Prostate gland (tissue), 2 donors: ENCODE measurements at regions of chr18 and their contacts with region 1.

Region 1: DNA sequence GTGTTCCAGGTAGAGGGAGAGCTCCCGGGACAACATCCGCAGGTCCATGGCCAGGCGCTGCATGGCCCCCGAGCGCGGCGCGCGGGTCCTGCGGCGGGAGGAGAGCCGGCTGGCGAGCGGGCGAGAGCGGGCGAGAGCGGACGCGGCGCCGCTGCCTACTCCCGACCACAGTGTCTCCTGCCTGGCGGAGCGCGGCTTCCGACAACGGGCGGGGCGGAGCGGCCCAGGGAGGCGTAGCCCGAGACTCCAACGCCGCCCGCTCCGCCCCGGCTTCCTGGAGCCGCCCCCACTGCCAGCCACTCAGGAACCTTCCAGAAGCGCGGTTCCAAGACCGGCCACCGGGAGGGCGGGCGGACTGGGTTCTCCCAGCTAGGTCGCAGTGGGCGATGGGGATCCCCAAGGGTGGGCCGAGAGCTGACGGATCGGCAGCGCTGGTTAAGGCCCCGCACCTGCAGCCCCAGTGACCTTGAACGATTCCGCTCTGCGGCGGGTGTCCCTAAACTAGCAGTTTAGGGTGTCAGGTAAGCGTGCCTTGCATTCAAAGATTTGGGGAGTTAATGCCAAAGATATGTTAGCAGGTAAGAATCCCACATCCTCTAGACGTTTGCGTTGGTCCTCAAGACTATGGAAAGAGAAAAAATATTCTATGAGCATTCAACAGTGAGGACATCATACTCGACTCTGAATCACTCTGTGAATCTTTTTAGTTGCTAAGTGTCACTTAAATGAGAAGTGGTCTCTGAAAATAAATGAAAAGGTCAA is at the start of gene ABHD3:
- DNase-seq: peak; percentile 94
- H3K4me3 ChIP-seq: peak within 1 kb of the TSS; percentile 79 to 81
- H3K27ac ChIP-seq: peak within 1 kb of the TSS; percentile 93 to 96
- H3K4me1 ChIP-seq: no peaks in the 10 kb centered on the region
- H3K27me3 ChIP-seq: no peaks in the 10 kb centered on the region
- CTCF ChIP-seq: peak in 3 of 4 experiments; percentile 49 to 82 (median 80)
- POLR2A ChIP-seq: peak; percentile 99
- total RNA-seq, gene ABHD3: 9.6 to 18.5 TPM

Region 2: GRCh38 chr18:21612125-21612991 is 92.4 kb before region 1 on chr18 and contains the start of gene SNRPD1:
- intact Hi-C with region 1: loop called (anchors 5 kb)
- DNase-seq: peak; percentile 72
- H3K4me3 ChIP-seq: peak within 1 kb of the TSS; percentile 54 to 57
- H3K27ac ChIP-seq: peak within 1 kb of the TSS; percentile 67 to 70
- H3K4me1 ChIP-seq: no peaks in the 10 kb centered on the region
- H3K27me3 ChIP-seq: no peaks in the 10 kb centered on the region
- CTCF ChIP-seq: peak; percentile 82 to 95 (median 95)
- POLR2A ChIP-seq: peak; percentile 34
- total RNA-seq, gene SNRPD1: 6.0 TPM

Region 3: GRCh38 chr18:21831413-21831831 is 126.6 kb after region 1 on chr18:
- intact Hi-C with region 1: loop called (anchors 10 kb)
- DNase-seq: no peak
- H3K4me3 ChIP-seq: no peak overlapping the region
- H3K27ac ChIP-seq: no peak overlapping the region
- H3K4me1 ChIP-seq: no peaks in the 10 kb centered on the region
- H3K27me3 ChIP-seq: no peaks in the 10 kb centered on the region
- CTCF ChIP-seq: no peak
- POLR2A ChIP-seq: no peak